Colonic mucosa (tissue), 4 donors: ENCODE measurements at regions of chr5 and their contacts with region 1.

Region 1: DNA sequence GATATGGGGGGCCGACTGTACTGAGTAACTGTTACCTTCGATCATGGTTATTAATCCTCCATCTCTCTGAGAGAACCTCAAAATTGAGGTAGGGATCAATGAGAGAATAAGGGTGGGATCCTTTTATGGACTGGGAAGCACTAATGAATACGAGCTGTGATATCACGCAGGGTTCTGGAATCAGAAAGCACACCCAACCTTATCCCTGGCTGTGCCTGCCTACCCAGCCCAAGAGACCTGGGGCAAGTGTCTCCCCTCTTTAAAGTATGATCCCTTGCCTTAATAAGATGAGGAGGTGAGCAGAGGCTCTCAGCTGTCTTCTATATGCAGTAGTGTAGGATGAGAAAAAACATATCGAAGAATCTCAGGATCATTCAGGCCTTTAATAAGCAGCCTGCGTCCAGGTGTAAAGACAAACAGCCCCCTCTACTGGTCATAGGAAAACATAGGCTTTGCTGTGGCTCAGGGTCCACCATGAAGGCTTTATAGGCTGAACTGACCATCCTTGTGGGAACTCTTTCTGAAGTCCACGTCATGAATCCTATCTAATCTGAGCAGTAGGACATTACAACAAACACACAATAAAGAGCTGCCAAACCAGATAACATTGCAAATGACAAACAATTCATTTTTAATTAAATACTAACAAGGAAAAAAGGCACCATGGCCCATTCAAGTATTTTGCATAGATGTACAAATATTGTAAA is 16.8 kb downstream of the NIPAL4 start:
- DNase-seq: peak; percentile 45
- H3K4me3 ChIP-seq: no peak overlapping the region
- H3K27ac ChIP-seq: no peak overlapping the region
- H3K4me1 ChIP-seq: no peaks in the 10 kb centered on the region
- H3K27me3 ChIP-seq: no peaks in the 10 kb centered on the region
- CTCF ChIP-seq: peak; percentile 71

Region 2: GRCh38 chr5:157245477-157245876 is 231.4 kb before region 1 on chr5:
- intact Hi-C with region 1: loop called (anchors 10 kb)
- DNase-seq: no peak
- H3K4me3 ChIP-seq: no peak overlapping the region
- H3K27ac ChIP-seq: no peak overlapping the region
- H3K4me1 ChIP-seq: no peaks in the 10 kb centered on the region
- H3K27me3 ChIP-seq: no peaks in the 10 kb centered on the region
- CTCF ChIP-seq: no peak

Region 3: DNA sequence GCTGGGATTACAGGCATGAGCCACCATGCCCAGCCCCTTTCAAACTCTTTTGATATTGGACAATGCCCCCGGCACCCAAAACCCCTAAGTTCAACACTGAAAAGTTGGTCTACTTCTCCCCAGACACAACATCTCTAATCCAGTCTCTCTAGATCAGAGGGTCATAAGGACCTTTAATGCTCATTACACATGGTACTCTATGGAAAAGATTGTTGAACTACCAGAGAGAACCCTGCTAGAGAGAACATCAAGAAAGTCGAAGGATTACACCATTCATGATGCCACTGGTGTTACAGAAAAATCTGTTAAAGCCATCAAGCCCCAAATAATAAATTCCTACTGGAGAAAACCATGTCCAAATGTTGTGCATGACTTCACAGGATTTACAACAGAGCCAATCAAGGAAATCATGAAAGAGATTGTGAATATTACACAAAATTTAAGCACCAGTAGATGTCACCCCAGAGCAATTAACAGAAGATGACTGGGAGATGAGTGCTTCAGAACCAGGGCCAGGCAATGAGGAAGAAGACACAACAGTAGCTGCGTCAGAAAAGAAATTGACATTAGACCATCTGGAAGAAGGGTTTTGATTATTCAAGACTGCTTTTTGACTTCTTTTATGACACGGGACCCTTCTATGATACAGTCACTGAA is 45.2 kb before region 1 on chr5:
- intact Hi-C with region 1: loop called (anchors 5 kb)
- DNase-seq: peak; percentile 36
- H3K4me3 ChIP-seq: no peak overlapping the region
- H3K27ac ChIP-seq: no peak overlapping the region
- H3K4me1 ChIP-seq: no peaks in the 10 kb centered on the region
- H3K27me3 ChIP-seq: no peaks in the 10 kb centered on the region
- CTCF ChIP-seq: peak; percentile 32

Region 4: DNA sequence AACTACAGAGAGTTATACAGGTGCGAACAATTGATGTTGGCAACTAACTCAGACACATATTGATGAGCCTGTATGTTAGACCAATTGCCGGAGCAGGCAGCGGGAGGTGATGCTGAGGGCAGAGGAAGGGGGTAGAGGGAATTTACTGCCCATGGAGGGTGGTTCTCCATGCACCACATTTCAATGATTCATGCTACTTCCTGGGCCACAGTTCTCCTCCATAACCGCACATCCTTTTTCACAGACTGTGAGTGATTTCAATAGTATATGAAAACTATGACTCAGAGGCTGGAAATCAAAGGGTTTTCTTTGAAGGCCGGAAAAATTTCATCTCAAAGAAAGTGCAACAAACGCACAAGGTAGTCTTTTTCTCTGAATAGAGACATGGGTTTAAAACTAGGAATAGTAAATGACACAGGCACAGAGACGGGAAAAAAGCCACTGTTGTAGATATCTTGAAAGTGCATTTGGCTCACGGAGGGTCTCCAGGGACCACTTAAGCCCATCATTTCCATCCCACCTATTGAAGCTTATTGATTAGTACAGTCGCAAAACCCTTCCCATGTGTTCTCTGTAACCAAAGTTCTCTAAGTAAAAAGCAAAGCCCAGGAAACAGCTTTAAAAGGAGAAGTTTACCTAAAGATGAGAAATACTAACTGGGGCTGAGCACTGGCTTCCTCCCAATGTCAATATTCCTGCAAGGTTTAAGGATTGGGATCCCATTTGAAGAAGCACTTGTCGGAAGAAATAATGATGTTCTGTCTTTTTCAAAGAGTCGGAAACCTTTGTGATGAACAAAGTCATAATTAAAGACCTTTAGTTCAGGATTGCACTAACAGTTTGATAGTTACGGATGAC is 126.7 kb after region 1 on chr5:
- intact Hi-C with region 1: no loop called
- DNase-seq: no peak
- H3K4me3 ChIP-seq: no peak overlapping the region
- H3K27ac ChIP-seq: no peak overlapping the region
- H3K4me1 ChIP-seq: no peaks in the 10 kb centered on the region
- H3K27me3 ChIP-seq: no peaks in the 10 kb centered on the region
- CTCF ChIP-seq: no peak